Vagina (tissue), 2 donors: ENCODE measurements at regions of chr9 and their contacts with region 1.

Region 1: DNA sequence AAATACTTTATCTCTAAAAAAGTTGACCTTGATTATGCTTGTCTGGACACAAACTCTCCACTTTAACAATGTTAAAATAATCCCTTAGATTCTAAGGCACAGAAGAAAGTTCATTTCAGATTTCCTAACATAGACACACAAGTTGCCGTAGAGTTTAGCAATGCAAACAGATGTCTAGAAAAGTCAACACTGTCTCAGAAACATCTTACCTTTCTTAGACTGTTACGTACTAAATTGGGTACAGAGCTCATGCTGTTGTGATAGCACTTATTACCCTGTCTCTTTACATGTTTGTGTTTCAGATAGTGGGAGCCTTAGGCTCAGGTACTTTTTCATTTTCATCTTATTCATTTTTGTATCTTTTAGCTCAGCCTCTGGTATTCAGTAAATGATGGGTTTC is 52.0 kb downstream of the C5 start:
- DNase-seq: no peak
- H3K4me3 ChIP-seq: no peak overlapping the region
- H3K27ac ChIP-seq: no peak overlapping the region
- H3K4me1 ChIP-seq: no peaks in the 10 kb centered on the region
- H3K27me3 ChIP-seq: no peaks in the 10 kb centered on the region
- CTCF ChIP-seq: no peak
- POLR2A ChIP-seq: no peak

Region 2: GRCh38 chr9:121059998-121060636 is 62.0 kb after region 1 on chr9:
- intact Hi-C with region 1: loop called (anchors 10 kb)
- DNase-seq: no peak
- H3K4me3 ChIP-seq: no peak overlapping the region
- H3K27ac ChIP-seq: no peak overlapping the region
- H3K4me1 ChIP-seq: no peaks in the 10 kb centered on the region
- H3K27me3 ChIP-seq: no peaks in the 10 kb centered on the region
- CTCF ChIP-seq: peak; percentile 51 to 64 (median 62)
- POLR2A ChIP-seq: no peak

Region 3: DNA sequence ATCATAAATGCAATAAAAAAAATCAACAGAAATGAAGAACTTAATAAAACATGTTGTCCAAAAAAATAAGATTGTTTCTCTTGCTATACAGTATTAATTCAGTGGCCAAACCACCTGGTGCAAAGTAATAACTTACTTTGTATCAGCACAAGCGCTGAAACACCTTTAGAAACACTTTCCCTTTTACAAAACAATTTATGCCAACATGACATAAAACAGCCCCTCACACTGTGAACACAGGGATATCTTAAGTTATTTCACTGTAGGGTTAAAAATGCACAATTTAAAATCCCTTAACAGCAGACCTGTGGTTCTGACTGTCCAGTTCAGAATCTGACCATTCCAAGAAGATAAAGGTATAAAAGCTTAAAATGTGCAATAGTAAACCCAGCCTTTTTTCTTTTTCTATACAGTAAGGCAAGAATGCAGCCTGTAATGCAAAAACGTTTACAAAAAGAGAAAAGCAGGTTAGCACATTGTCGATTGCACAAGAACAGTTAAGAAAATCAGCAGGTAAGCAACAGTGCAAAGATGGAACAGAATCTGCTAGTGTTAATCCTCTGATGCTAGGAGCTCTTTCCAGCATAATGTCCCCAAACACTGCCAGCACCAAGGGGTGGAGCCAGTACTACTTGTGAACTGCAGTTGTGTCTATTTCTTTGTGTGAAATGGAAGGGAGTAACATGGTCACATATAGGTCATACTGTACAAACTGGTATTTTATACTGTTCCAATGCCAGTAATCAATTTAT is 182.0 kb after region 1 on chr9:
- intact Hi-C with region 1: no loop called
- DNase-seq: no peak
- H3K4me3 ChIP-seq: no peak overlapping the region
- H3K27ac ChIP-seq: no peak overlapping the region
- H3K4me1 ChIP-seq: peaks cover 24% of the 10 kb centered on the region
- H3K27me3 ChIP-seq: no peaks in the 10 kb centered on the region
- CTCF ChIP-seq: no peak
- POLR2A ChIP-seq: no peak